HepG2 (cell line): ENCODE measurements at regions of chr2 and their contacts with region 1.

Region 1: GRCh38 chr2:39913648-39914461 is 134.8 kb upstream of the THUMPD2 start:
- DNase-seq: peak; percentile 60
- ATAC-seq: peak; percentile 89
- H3K4me3 ChIP-seq: no peak overlapping the region
- H3K27ac ChIP-seq: no peak overlapping the region
- H3K4me1 ChIP-seq: no peaks in the 10 kb centered on the region
- H3K27me3 ChIP-seq: no peaks in the 10 kb centered on the region; a peak in 1 of 5 replicates
- CTCF ChIP-seq: peak; percentile 83
- EP300 ChIP-seq: no peak
- POLR2A ChIP-seq: no peak
- RAD21 ChIP-seq: peak; percentile 80

Region 2: GRCh38 chr2:40554668-40555285 is 640.9 kb after region 1 on chr2:
- CTCF ChIA-PET with region 1: interaction called, 23 read pairs
- POLR2A ChIA-PET with region 1: no interaction called
- in situ Hi-C with region 1: loop called (anchors 5 kb)
- intact Hi-C with region 1: loop called (anchors 1 kb)
- DNase-seq: peak; percentile 56
- ATAC-seq: peak; percentile 93
- H3K4me3 ChIP-seq: no peak overlapping the region
- H3K27ac ChIP-seq: no peak overlapping the region
- H3K4me1 ChIP-seq: no peaks in the 10 kb centered on the region
- H3K27me3 ChIP-seq: no peaks in the 10 kb centered on the region
- CTCF ChIP-seq: peak; percentile 81
- EP300 ChIP-seq: no peak
- POLR2A ChIP-seq: no peak
- RAD21 ChIP-seq: peak; percentile 22; the same call in 1 of the 2 replicates

Region 3: DNA sequence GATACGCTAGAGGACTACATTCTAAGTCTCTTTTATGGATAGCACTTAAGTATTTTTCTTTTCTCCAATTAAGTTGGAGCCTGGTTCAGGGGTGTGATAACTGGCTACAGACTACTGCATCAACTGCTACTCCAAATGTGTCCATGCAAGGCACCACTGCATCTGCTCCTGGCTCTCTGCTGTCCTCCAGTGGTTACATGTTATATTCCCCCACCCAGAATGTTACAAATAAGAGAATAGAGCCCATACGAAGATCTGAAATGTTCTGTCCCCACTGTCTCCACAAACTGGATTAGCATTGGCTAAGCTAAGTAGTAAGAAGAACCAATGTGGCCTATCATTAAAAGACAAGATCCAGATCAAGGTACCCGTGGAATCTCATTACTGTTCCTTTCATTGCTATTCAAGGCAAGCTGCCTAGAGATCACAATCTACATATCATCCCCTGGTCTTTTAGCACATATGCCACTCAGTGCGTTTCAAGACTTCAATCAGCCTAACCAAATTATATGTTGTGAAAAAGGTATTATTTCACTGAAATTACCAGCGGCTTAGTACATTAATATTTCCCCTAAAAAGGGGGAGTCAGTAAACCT is 846.3 kb after region 1 on chr2:
- CTCF ChIA-PET with region 1: interaction called, 8 read pairs
- POLR2A ChIA-PET with region 1: no interaction called
- in situ Hi-C with region 1: loop called (anchors 10 kb)
- intact Hi-C with region 1: loop called (anchors 1 kb)
- DNase-seq: peak; percentile 35
- ATAC-seq: peak; percentile 99
- H3K4me3 ChIP-seq: no peak overlapping the region
- H3K27ac ChIP-seq: no peak overlapping the region
- H3K4me1 ChIP-seq: no peaks in the 10 kb centered on the region
- H3K27me3 ChIP-seq: no peaks in the 10 kb centered on the region
- CTCF ChIP-seq: peak; percentile 77
- EP300 ChIP-seq: no peak
- POLR2A ChIP-seq: no peak
- RAD21 ChIP-seq: peak; percentile 68

Region 4: DNA sequence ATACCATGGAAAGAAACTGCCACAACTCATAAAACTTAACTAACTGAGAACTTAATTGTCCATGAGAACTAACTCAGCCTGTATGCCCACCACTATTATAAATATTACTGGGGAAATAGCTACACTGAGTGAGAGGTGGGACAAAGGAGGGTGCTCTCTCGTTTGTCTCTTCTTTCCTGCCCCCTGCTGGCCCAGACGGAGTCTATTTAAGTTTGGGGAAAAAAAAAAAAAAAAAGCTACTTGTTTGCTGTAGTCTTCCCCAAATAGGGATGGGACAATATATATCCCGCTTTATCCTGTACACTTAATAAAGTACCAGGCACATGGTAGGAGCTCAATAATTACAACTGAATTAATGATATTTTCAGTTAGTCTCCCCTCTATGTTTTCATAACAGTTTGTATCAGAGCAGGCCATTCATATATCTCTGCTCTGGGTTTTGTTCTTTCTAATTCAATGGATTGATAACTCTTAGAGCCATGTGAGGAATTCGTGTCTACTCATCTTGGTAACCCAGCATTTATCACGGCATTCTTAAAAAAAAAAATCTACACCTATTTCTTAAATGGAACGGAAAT is 1486.3 kb after region 1 on chr2:
- CTCF ChIA-PET with region 1: interaction called, 4 read pairs
- POLR2A ChIA-PET with region 1: no interaction called
- in situ Hi-C with region 1: no loop called
- intact Hi-C with region 1: loop called (anchors 1 kb)
- DNase-seq: peak; percentile 17
- ATAC-seq: peak; percentile 77
- H3K4me3 ChIP-seq: no peak overlapping the region
- H3K27ac ChIP-seq: no peak overlapping the region
- H3K4me1 ChIP-seq: no peaks in the 10 kb centered on the region
- H3K27me3 ChIP-seq: no peaks in the 10 kb centered on the region
- CTCF ChIP-seq: peak; percentile 21; the same call in 1 of the 2 replicates
- EP300 ChIP-seq: no peak
- POLR2A ChIP-seq: no peak
- RAD21 ChIP-seq: no peak

Region 5: DNA sequence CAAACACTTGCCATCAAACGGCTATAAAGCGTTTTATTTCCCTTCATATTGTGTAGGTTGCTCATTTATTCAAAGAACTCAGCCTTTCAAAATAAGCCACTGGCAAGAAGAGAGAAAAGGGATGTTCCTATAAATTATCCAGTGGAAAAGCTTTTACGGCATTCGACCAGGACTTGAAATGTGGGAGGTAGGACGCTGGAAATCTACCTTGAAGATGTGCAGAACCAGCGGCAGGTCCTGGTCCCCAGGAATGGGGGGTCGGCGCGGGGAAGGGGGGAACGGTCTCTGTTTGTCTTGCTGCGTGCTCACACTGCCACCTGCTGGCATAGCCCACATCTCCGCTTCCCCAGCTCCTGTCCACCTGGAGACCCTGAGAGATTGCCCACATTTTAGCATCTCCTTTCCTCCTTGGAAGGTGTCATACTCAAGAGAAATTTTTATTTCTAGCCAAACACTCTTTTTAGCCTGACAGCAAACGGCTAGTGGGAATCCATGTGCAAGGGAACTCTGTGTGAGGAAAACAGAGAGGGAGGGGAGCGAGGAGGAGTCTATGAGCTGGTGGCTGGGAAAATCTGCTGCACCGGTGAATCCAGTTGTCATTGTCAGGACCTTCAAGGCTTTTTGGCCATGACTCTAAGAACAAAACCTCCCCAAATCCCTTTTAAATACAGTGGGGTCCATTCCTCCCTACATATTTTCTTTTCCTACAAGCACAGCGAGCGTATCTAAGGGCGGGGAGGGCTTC is 1785.0 kb after region 1 on chr2:
- CTCF ChIA-PET with region 1: interaction called, 4 read pairs
- POLR2A ChIA-PET with region 1: no interaction called
- in situ Hi-C with region 1: loop called (anchors 25 kb)
- intact Hi-C with region 1: loop called (anchors 5 kb)
- DNase-seq: no peak
- ATAC-seq: peak; percentile 93
- H3K4me3 ChIP-seq: no peak overlapping the region
- H3K27ac ChIP-seq: no peak overlapping the region
- H3K4me1 ChIP-seq: no peaks in the 10 kb centered on the region
- H3K27me3 ChIP-seq: no peaks in the 10 kb centered on the region; a peak in 1 of 5 replicates
- CTCF ChIP-seq: peak; percentile 92
- EP300 ChIP-seq: no peak
- POLR2A ChIP-seq: no peak
- RAD21 ChIP-seq: peak; percentile 62

Region 6: DNA sequence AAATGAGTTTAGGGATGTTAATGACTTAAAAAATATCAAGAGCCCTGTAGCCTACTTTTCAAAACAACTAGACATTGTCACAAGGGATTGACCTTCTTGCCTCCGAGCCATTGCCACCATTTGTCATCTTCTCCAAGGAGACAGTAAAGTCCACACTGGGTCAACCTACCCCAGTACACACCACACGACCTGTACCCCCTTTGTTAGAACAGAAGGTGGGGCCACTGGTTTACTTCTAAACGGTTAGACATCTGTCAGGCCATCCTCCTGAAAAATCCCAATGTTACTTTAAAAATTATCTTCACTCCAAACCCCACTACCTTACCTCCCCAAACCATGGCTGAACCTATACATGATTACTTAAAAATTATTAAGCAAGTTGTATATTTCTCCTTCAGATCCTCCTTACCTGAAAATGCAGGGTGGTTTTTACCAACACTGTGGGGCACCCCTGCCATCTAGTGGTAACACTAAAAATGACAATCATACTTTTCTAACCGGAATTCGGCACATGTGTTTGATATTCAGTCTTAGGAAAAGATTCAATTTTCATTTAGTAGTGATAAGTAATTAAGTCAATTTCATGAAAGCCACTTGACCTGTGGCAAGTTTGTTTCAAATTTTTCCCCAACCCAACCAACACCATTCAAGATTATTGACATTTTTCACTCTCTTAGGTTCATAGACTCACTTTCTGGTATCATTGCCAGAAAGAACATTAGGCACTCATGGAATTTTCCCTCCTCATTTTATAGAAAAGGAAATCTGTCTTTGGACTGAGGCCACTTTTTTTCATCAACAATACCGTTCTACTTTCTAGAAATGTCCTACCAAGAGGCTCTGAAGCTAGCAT is 1868.7 kb after region 1 on chr2:
- CTCF ChIA-PET with region 1: interaction called, 5 read pairs
- POLR2A ChIA-PET with region 1: no interaction called
- in situ Hi-C with region 1: loop called (anchors 25 kb)
- intact Hi-C with region 1: no loop called
- DNase-seq: peak; percentile 41
- ATAC-seq: peak; percentile 72
- H3K4me3 ChIP-seq: no peak overlapping the region
- H3K27ac ChIP-seq: no peak overlapping the region
- H3K4me1 ChIP-seq: no peaks in the 10 kb centered on the region
- H3K27me3 ChIP-seq: no peaks in the 10 kb centered on the region; a peak in 2 of 5 replicates
- CTCF ChIP-seq: peak; percentile 88
- EP300 ChIP-seq: no peak
- POLR2A ChIP-seq: no peak
- RAD21 ChIP-seq: peak; percentile 74